Activated naive CD4-positive, alpha-beta T cell treated with anti-CD3 and anti-CD28 coated beads for 36 hours (primary cell): ENCODE measurements at regions of chr6 and their contacts with region 1.

Region 1: DNA sequence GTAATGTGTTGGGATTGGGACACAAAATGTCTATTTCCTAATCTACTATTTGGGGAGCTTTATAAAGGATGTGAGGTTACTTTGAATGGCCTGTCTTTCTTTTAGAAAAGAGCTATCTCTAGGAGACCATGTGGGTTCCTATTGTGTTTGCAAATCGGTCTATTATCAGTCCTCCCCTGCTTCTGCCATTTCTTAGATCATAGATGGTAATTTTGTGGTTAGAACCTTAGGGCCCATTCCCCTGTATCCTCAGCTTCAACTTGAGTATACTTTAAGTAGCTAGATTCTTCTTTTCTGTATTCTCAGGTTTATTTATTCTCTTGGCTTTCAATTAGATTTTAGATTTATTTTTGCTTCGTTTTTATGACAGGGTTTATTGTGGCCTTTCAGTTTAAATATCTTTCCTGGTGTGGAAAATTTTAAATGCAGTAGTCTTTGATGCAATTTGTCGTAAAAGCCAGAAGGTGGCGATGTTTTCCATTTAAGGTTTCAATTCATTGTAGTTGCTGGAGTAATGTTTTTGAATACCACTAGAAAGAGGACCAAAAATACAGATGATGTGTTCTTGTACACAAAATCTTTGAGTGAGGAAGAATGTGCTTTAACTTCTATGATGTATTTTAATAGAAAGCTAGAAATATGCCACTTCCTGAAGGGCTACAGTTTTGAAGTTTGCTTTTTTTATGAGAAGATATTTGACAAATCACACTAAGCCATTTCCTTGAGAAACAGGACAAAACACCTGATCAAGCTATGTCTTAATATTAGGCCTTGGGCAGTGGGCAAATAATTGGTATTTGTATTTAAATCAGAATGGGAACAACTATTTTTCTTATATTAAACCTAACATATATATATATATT is 20.3 kb downstream of the TBPL1 start:
- DNase-seq: no peak
- H3K4me3 Mint-ChIP-seq: no peak overlapping the region
- H3K27ac Mint-ChIP-seq: no peak overlapping the region
- H3K4me1 Mint-ChIP-seq: peaks cover 32% of the 10 kb centered on the region
- H3K27me3 Mint-ChIP-seq: no peaks in the 10 kb centered on the region

Region 2: GRCh38 chr6:132715204-132715603 is 1258.1 kb before region 1 on chr6:
- CTCF ChIA-PET with region 1: no interaction called
- intact Hi-C with region 1: no loop called
- DNase-seq: no peak
- H3K4me3 Mint-ChIP-seq: no peak overlapping the region
- H3K27ac Mint-ChIP-seq: no peak overlapping the region
- H3K4me1 Mint-ChIP-seq: no peaks in the 10 kb centered on the region
- H3K27me3 Mint-ChIP-seq: peaks cover 13% of the 10 kb centered on the region

Region 3: DNA sequence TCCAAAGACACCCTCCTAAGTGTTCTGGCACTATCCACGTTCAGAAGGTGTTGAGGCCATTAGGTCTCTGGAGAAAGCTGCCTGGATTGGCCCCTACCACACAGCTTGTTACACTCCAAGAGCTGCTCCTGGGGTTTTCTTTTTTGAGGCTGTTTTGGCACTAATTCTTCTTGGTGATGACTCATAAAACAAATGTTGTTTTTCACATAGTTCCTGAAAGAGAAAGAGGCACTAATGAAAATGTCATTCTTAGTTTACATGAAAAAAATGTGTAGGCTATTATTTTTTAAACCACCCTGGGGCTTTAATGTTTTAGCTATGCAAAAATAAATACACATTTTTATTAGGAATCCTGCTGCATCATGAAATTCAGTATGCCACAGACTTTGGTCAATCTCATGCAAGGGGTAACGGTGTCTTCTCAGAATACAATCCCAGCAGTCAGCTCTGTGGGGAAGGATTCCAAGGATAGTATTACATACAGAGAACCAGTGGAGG is 17.8 kb after region 1 on chr6:
- CTCF ChIA-PET with region 1: interaction called, 25 read pairs
- intact Hi-C with region 1: no loop called
- DNase-seq: peak; percentile 10
- H3K4me3 Mint-ChIP-seq: no peak overlapping the region
- H3K27ac Mint-ChIP-seq: no peak overlapping the region
- H3K4me1 Mint-ChIP-seq: peaks cover 2% of the 10 kb centered on the region
- H3K27me3 Mint-ChIP-seq: no peaks in the 10 kb centered on the region

Region 4: GRCh38 chr6:134021396-134022122 is 48.2 kb after region 1 on chr6:
- CTCF ChIA-PET with region 1: interaction called, 11 read pairs
- intact Hi-C with region 1: no loop called
- DNase-seq: no peak
- H3K4me3 Mint-ChIP-seq: no peak overlapping the region
- H3K27ac Mint-ChIP-seq: no peak overlapping the region
- H3K4me1 Mint-ChIP-seq: peaks cover 3% of the 10 kb centered on the region
- H3K27me3 Mint-ChIP-seq: no peaks in the 10 kb centered on the region